PC-9 (cell line): ENCODE measurements at regions of chr19 and their contacts with region 1.

Region 1: GRCh38 chr19:15154002-15154612 is 46.7 kb downstream of the NOTCH3 start:
- DNase-seq: peak; percentile 64 to 70
- H3K4me3 ChIP-seq: 0 out of 2 replicates have a peak overlapping the region, but pooled peaks have one; percentile 17
- H3K27ac ChIP-seq: no peak overlapping the region
- H3K4me1 ChIP-seq: peaks cover 5% of the 10 kb centered on the region; the same call in 1 of the 2 replicates
- H3K27me3 ChIP-seq: no peaks in the 10 kb centered on the region
- CTCF ChIP-seq: peak; percentile 92

Region 2: GRCh38 chr19:13942023-13942684 is 1212.0 kb before region 1 on chr19:
- CTCF ChIA-PET with region 1: no interaction called
- POLR2A ChIA-PET with region 1: no interaction called
- intact Hi-C with region 1: no loop called
- DNase-seq: no peak
- H3K4me3 ChIP-seq: no peak overlapping the region
- H3K27ac ChIP-seq: no peak overlapping the region
- H3K4me1 ChIP-seq: no peaks in the 10 kb centered on the region
- H3K27me3 ChIP-seq: no peaks in the 10 kb centered on the region
- CTCF ChIP-seq: no peak

Region 3: DNA sequence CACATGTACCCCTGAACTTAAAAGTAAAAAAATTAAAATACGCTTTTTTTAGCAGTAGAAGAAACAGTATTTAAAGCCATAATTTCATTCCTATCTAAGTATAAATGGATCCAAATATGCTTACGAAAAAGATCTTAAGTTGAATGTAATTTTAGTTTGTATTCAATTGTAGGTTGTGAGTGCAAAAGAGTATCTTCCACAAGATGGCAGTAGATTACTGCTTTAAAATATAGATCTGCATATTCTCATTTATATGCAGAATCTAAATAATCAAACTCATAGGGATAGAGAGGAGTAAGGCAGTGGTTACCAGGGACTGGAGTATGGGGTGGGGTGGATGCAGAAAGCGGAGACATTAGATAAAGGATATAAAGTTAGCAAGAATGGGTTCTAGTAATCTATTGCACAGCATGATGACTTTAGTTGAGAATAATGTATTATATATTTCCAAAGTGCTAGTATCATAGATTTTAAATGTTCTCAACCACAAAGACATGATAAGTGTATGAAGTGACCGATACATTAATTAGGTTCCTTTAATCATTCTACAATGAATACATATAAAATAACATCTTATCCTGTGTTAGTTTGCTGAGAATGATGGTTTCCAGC is 282.4 kb before region 1 on chr19:
- CTCF ChIA-PET with region 1: interaction called, 5 read pairs
- POLR2A ChIA-PET with region 1: no interaction called
- intact Hi-C with region 1: loop called (anchors 5 kb)
- DNase-seq: peak; percentile 0 to 59
- H3K4me3 ChIP-seq: no peak overlapping the region
- H3K27ac ChIP-seq: no peak overlapping the region
- H3K4me1 ChIP-seq: peaks cover 6% of the 10 kb centered on the region; the same call in 1 of the 2 replicates
- H3K27me3 ChIP-seq: no peaks in the 10 kb centered on the region
- CTCF ChIP-seq: peak; percentile 91

Region 4: DNA sequence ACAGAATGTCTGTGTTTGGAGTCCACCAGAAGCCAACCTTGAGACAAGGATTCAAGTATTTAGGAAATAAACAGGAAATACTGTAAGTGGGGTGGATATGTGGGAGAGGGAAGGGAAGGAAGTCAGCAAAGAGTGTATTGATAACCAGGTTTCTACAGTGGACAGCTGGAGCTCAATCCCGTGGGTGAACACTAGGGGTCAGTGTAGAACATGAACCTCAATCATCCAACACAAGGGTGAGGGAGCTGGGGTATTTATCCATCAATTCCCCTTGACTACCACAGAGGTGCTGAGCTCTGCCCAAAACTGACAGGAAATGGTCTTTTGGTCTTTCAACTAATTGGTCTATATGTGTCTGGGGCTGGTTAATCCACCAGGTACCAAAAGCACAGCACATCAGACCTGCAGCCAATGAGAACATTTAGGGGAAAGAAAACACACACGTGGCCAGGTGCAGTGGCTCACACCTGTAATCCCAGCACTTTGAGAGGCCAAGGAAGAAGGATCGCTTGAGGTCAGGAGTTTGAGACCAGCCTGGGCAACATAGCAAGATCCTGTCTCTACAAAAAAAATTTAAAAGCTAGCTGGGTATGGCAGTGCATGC is 52.5 kb before region 1 on chr19:
- CTCF ChIA-PET with region 1: no interaction called
- POLR2A ChIA-PET with region 1: no interaction called
- intact Hi-C with region 1: loop called (anchors 2 kb)
- DNase-seq: peak in 1 of 2 experiments; percentile 34
- H3K4me3 ChIP-seq: no peak overlapping the region
- H3K27ac ChIP-seq: no peak overlapping the region
- H3K4me1 ChIP-seq: peaks cover 8% of the 10 kb centered on the region; the same call in 1 of the 2 replicates
- H3K27me3 ChIP-seq: no peaks in the 10 kb centered on the region
- CTCF ChIP-seq: peak; percentile 85

Region 5: GRCh38 chr19:15195371-15196334 is 41.5 kb after region 1 on chr19:
- CTCF ChIA-PET with region 1: no interaction called
- POLR2A ChIA-PET with region 1: no interaction called
- intact Hi-C with region 1: no loop called
- DNase-seq: peak; percentile 92 to 98
- H3K4me3 ChIP-seq: peak overlapping the region; percentile 57
- H3K27ac ChIP-seq: peak overlapping the region; percentile 82
- H3K4me1 ChIP-seq: peaks cover 43% of the 10 kb centered on the region
- H3K27me3 ChIP-seq: no peaks in the 10 kb centered on the region
- CTCF ChIP-seq: peak; percentile 35; the same call in 1 of the 2 replicates

Region 6: DNA sequence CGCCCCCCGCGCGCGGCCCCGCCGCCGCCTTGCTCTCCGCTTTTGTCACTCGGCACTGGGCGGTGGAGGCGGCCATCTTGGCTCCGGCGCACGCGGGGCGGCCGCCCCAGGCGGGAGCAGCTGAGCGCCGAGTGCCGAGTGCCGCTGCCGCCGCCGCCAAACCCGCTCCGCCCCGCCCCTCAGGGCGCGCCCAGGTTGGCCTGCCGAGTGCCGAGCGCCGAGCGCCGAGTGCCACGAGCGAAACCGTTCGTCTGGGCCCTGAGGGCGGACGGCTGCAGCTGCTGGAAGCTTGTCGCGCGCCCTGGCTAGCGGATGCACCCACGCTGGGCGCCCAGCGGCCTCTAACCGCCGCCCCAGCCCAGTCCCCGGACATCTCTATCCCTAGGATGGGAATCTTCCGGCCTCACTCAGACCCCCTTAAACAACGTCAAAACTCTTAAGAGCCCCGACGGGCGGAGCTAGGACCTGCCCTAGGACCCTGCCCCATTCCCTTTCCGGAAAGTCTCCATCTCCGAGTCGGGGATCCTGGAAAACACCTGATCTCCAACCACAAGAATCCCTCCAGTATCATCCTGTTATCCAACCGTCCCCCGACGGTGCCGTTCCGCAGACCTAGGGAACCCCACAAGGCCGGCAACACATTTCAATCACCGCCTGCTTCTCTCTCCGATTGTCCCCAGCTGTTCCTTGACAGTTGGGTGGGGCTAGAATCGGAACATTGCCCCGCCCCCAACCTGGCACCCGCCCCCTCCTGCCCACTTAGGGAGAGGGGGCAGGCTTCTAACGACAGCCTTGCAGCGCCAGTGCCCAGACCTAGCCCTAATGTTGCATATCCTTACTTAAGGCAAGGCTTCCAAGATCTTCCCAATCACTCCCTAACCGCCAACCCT is 278.8 kb after region 1 on chr19:
- CTCF ChIA-PET with region 1: no interaction called
- POLR2A ChIA-PET with region 1: no interaction called
- intact Hi-C with region 1: no loop called
- DNase-seq: peak; percentile 74 to 91
- H3K4me3 ChIP-seq: peak overlapping the region; percentile 95
- H3K27ac ChIP-seq: 0 out of 2 replicates have a peak overlapping the region, but pooled peaks have one; percentile 13
- H3K4me1 ChIP-seq: peaks cover 12% of the 10 kb centered on the region
- H3K27me3 ChIP-seq: no peaks in the 10 kb centered on the region
- CTCF ChIP-seq: no peak

Region 7: GRCh38 chr19:15584541-15585115 is 430.5 kb after region 1 on chr19:
- CTCF ChIA-PET with region 1: no interaction called
- POLR2A ChIA-PET with region 1: interaction called, 16 read pairs
- intact Hi-C with region 1: no loop called
- DNase-seq: peak; percentile 68 to 78
- H3K4me3 ChIP-seq: no peak overlapping the region
- H3K27ac ChIP-seq: no peak overlapping the region
- H3K4me1 ChIP-seq: no peaks in the 10 kb centered on the region
- H3K27me3 ChIP-seq: peaks cover 19% of the 10 kb centered on the region
- CTCF ChIP-seq: peak; percentile 95